Endothelial cell of umbilical vein (primary cell): ENCODE measurements at regions of chr5 and their contacts with region 1.

Region 1: DNA sequence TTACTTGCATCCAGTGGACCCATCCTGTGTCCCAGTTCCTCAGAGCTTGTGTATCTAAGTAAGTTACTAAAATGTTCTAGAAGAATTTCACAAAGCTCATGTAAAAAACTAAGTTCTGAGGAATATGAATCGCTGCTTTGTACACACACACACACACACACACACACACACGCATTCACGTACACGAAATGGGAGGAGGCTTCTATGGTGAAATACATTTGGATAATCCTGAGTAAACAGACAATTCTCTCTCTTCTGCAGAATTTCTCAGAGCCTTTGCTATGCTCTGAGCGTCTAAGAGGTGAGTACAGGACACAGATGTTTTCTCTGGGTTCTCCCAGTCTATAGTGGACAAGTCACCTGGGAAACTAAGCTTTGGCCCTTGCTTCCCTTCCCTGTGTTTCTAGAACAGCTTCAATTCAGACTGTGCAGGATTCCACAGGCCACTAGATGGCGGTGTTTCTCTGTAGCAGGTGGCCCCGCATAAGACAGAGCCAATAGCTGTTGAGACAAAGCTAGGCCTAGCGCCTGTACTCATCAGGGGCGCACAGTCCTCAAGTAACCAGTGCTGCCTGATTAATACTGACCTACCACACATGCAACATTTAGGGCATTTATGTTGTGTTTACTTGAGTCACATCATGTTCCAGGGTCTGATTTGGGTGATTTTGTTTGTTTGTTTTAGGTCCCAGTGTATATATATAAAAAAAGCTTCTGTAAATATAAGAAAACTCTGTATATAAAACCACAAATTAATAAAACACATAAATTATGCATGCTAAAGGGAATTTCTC is 114.8 kb downstream of the LIFR start:
- DNase-seq: peak; percentile 89
- H3K4me3 ChIP-seq: no peak overlapping the region
- H3K27ac ChIP-seq: no peak overlapping the region
- H3K4me1 ChIP-seq: no peaks in the 10 kb centered on the region
- H3K27me3 ChIP-seq: no peaks in the 10 kb centered on the region
- CTCF ChIP-seq: peak; percentile 89 to 96
- POLR2A ChIP-seq: no peak

Region 2: GRCh38 chr5:38463634-38464521 is 22.2 kb after region 1 on chr5:
- CTCF ChIA-PET with region 1: interaction called, 163 read pairs
- POLR2A ChIA-PET with region 1: interaction called, 3 read pairs
- dilution Hi-C with region 1: no loop called
- intact Hi-C with region 1: no loop called
- DNase-seq: peak; percentile 89
- H3K4me3 ChIP-seq: no peak overlapping the region
- H3K27ac ChIP-seq: peak overlapping the region; percentile 90
- H3K4me1 ChIP-seq: peaks cover 64% of the 10 kb centered on the region
- H3K27me3 ChIP-seq: no peaks in the 10 kb centered on the region
- CTCF ChIP-seq: no peak
- POLR2A ChIP-seq: peak; percentile 73

Region 3: DNA sequence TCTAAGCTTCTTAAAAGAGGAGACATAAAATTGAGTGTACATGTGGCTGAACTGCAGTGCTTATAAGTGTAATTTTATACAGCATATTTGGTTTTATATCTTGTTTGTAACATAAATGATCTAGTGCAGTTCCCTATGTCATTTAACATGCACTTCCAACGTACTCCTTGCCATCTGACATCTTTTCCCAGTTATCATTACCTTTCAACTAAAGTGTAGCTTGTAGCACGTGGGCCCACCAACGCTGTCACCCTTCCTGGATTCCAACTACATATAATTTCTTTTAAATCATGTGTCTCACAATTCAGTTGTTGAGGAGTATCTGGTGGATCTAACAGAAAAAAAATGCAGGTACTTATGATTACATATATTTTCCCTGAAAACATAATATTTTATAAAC is 64.7 kb after region 1 on chr5:
- CTCF ChIA-PET with region 1: interaction called, 22 read pairs
- POLR2A ChIA-PET with region 1: no interaction called
- dilution Hi-C with region 1: no loop called
- intact Hi-C with region 1: no loop called
- DNase-seq: no peak
- H3K4me3 ChIP-seq: no peak overlapping the region
- H3K27ac ChIP-seq: no peak overlapping the region
- H3K4me1 ChIP-seq: no peaks in the 10 kb centered on the region
- H3K27me3 ChIP-seq: no peaks in the 10 kb centered on the region
- CTCF ChIP-seq: no peak
- POLR2A ChIP-seq: no peak

Region 4: DNA sequence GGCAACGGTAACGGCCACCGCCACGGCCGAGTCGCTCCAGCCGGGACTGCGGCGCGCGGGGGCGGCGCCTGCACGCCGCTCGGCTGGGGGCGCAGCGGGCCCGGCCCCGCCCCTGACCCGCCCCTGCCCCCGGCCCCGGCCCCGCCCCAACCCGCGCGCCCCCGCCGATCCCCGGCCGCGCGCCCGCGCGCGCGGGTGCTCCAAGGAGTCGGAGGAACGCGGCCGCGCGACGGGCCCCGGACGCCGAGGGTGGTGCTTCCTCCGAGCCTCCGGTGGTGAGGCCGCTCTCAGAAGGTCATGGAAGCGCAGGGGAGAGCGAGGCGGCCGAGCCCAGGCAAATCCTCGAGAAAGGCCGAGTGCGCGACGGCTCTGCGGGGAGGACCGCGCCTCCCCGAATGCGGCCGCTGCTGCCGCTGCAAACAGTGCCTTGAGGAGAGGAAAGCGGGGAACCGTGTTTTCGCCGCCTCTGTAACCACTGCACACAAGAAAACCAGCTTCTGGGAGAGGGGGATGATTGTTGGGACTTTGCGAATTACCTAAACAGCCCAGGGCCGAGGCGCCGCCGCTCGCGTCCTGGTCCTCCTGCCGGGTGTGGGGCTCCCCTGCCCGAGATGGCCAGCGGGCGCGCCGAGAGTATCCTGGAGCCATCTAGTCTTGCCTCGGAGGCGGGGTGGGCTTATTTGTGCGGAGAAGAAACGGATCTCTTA is 115.1 kb after region 1 on chr5 and contains the start of gene LIFR:
- CTCF ChIA-PET with region 1: interaction called, 177 read pairs
- POLR2A ChIA-PET with region 1: no interaction called
- dilution Hi-C with region 1: no loop called
- intact Hi-C with region 1: loop called (anchors 1 kb)
- DNase-seq: peak; percentile 80
- H3K4me3 ChIP-seq: peak within 1 kb of the TSS; percentile 82 to 86 (median 83)
- H3K27ac ChIP-seq: peak within 1 kb of the TSS; percentile 68
- H3K4me1 ChIP-seq: peaks cover 21% of the 10 kb centered on the region
- H3K27me3 ChIP-seq: peaks cover 0 to 2% of the 10 kb centered on the region in 2 experiments
- CTCF ChIP-seq: peak in 1 of 2 donors; percentile 3
- POLR2A ChIP-seq: peak; percentile 66
- total RNA-seq, gene LIFR: 34.9 and 36.4 TPM in 2 replicates

Region 5: GRCh38 chr5:38714703-38715355 is 273.2 kb after region 1 on chr5:
- CTCF ChIA-PET with region 1: interaction called, 10 read pairs
- POLR2A ChIA-PET with region 1: no interaction called
- dilution Hi-C with region 1: no loop called
- intact Hi-C with region 1: no loop called
- DNase-seq: no peak
- H3K4me3 ChIP-seq: no peak overlapping the region
- H3K27ac ChIP-seq: no peak overlapping the region
- H3K4me1 ChIP-seq: no peaks in the 10 kb centered on the region
- H3K27me3 ChIP-seq: peaks cover 0 to 3% of the 10 kb centered on the region in 2 experiments
- CTCF ChIP-seq: no peak
- POLR2A ChIP-seq: no peak

Region 6: GRCh38 chr5:38922199-38922598 is 480.5 kb after region 1 on chr5:
- CTCF ChIA-PET with region 1: interaction called, 32 read pairs
- POLR2A ChIA-PET with region 1: no interaction called
- dilution Hi-C with region 1: no loop called
- intact Hi-C with region 1: loop called (anchors 2 kb)
- DNase-seq: peak; percentile 65
- H3K4me3 ChIP-seq: no peak overlapping the region
- H3K27ac ChIP-seq: no peak overlapping the region
- H3K4me1 ChIP-seq: no peaks in the 10 kb centered on the region
- H3K27me3 ChIP-seq: peaks cover 0 to 3% of the 10 kb centered on the region in 2 experiments
- CTCF ChIP-seq: peak; percentile 87 to 88
- POLR2A ChIP-seq: no peak